B cell (primary cell): ENCODE measurements at regions of chr1 and their contacts with region 1.

Region 1: GRCh38 chr1:145891587-145892485 is 6.2 kb upstream of the ANKRD35 start:
- DNase-seq: peak; percentile 61
- ATAC-seq: peak; percentile 70
- H3K4me3 ChIP-seq: no peak overlapping the region
- H3K4me3 Mint-ChIP-seq: no peak overlapping the region
- H3K27ac ChIP-seq: no peak overlapping the region
- H3K27ac Mint-ChIP-seq: no peak overlapping the region
- H3K4me1 ChIP-seq: no peaks in the 10 kb centered on the region
- H3K4me1 Mint-ChIP-seq: peaks cover under 1% of the 10 kb centered on the region
- H3K27me3 ChIP-seq: no peaks in the 10 kb centered on the region
- H3K27me3 Mint-ChIP-seq: no peaks in the 10 kb centered on the region
- CTCF ChIP-seq: peak; percentile 72

Region 2: DNA sequence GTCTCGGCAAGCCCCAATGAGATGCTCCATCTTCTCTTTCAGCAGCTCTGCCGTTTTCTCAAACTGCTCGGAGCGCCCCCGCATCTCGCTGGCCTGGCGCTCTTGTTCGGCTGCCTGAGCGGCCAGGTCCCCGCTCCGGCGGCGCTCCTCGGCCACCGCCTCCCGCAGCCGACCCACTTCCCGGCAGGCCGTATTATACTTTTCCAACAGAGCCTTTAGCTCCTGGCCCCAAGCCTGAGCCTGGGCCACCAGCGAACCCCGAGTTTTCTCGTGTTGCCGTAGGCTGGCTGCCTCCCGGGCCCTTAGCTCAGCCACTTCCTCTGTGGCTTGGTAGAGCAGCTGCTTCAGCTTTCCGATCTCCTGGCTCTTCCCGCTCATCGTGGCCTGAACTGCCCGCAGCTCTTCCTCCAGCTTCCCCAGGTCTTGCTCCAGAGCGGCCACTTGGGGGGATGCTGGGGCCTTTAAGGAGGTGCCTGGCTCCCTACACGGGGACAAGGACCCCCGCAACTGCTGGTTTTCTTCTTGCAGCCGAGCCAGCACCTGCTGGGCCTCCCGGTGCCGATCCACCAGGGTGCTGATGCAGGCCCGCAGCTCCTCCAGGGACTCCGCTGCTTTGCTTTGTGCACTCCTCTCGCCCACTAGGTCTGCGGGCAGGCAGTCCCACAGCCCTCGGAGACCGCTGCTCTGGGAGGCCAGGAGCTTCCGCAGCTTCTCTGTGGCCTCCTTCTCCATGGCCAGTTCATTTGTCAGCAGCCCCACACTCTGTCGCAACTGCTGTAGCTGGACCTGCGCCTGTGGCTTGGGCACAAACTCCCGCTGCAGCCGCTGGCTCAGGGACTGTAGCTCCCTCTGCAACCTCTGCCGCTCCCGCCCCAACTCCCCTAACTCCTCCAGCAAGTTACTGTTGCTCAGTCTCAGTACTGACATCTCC is 19.6 kb before region 1 on chr1:
- CTCF ChIA-PET with region 1: interaction called, 12 read pairs
- POLR2A ChIA-PET with region 1: no interaction called
- intact Hi-C with region 1: no loop called
- DNase-seq: peak; percentile 67
- ATAC-seq: peak; percentile 60
- H3K4me3 ChIP-seq: peak overlapping the region in 4 of 5 experiments; percentile 22 to 70 (median 51)
- H3K4me3 Mint-ChIP-seq: peak overlapping the region; percentile 85
- H3K27ac ChIP-seq: peak overlapping the region in 1 of 2 donors; percentile 32
- H3K27ac Mint-ChIP-seq: peak overlapping the region; percentile 41
- H3K4me1 ChIP-seq: peaks cover 10 to 11% of the 10 kb centered on the region in 2 donors
- H3K4me1 Mint-ChIP-seq: peaks cover 13% of the 10 kb centered on the region
- H3K27me3 ChIP-seq: peaks cover 0 to 22% (median 0%) of the 10 kb centered on the region in 4 experiments
- H3K27me3 Mint-ChIP-seq: peaks cover 44% of the 10 kb centered on the region
- CTCF ChIP-seq: no peak

Region 3: GRCh38 chr1:145906954-145907753 is 15.3 kb after region 1 on chr1:
- CTCF ChIA-PET with region 1: interaction called, 28 read pairs
- POLR2A ChIA-PET with region 1: no interaction called
- intact Hi-C with region 1: no loop called
- DNase-seq: no peak
- ATAC-seq: no peak
- H3K4me3 ChIP-seq: no peak overlapping the region
- H3K4me3 Mint-ChIP-seq: no peak overlapping the region
- H3K27ac ChIP-seq: no peak overlapping the region
- H3K27ac Mint-ChIP-seq: no peak overlapping the region
- H3K4me1 ChIP-seq: peaks cover 0 to 2% of the 10 kb centered on the region in 2 donors
- H3K4me1 Mint-ChIP-seq: peaks cover 6% of the 10 kb centered on the region
- H3K27me3 ChIP-seq: no peaks in the 10 kb centered on the region
- H3K27me3 Mint-ChIP-seq: no peaks in the 10 kb centered on the region
- CTCF ChIP-seq: no peak

Region 4: GRCh38 chr1:146007506-146008133 is 115.8 kb after region 1 on chr1:
- CTCF ChIA-PET with region 1: interaction called, 41 read pairs
- POLR2A ChIA-PET with region 1: no interaction called
- intact Hi-C with region 1: no loop called
- DNase-seq: no peak
- ATAC-seq: no peak
- H3K4me3 ChIP-seq: no peak overlapping the region
- H3K4me3 Mint-ChIP-seq: no peak overlapping the region
- H3K27ac ChIP-seq: peak overlapping the region in 1 of 2 donors; percentile 83
- H3K27ac Mint-ChIP-seq: peak overlapping the region; percentile 95
- H3K4me1 ChIP-seq: peaks cover 13 to 24% of the 10 kb centered on the region in 2 donors
- H3K4me1 Mint-ChIP-seq: peaks cover 22% of the 10 kb centered on the region
- H3K27me3 ChIP-seq: no peaks in the 10 kb centered on the region
- H3K27me3 Mint-ChIP-seq: no peaks in the 10 kb centered on the region
- CTCF ChIP-seq: peak; percentile 18

Region 5: DNA sequence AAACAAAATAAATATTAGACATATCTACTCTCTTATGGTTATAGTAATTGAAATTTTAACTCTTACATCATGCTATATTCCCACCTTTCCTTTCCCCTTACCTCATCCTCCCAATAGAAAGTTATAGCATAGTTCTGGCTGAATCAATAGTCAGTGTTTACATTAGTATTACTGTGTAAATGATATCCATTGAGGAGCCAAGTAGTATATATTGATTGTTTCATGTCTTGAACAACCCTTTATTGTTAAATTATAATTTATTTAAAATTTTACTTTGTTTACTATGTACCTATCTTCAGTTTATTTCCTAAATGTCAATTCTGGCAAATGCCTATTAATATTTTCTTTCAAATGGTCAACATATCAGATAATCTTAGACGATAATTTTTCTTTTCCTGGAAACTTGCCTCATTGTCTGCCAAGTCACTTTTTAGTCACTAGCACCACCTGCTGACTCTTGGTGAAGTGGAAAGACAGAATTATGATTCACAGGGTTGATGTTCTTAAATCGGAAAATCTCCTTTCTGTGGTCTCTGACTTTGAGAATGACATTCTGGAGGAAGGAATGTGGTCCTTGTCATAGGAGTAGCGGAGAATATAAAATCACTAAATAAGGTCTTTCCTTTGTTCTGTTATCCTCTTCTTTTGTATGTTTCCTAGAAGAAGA is 121.0 kb after region 1 on chr1:
- CTCF ChIA-PET with region 1: interaction called, 41 read pairs
- POLR2A ChIA-PET with region 1: no interaction called
- intact Hi-C with region 1: loop called (anchors 1 kb)
- DNase-seq: peak; percentile 82
- ATAC-seq: peak; percentile 51
- H3K4me3 ChIP-seq: no peak overlapping the region
- H3K4me3 Mint-ChIP-seq: no peak overlapping the region
- H3K27ac ChIP-seq: no peak overlapping the region
- H3K27ac Mint-ChIP-seq: no peak overlapping the region
- H3K4me1 ChIP-seq: peaks cover 0 to under 1% of the 10 kb centered on the region in 2 donors
- H3K4me1 Mint-ChIP-seq: peaks cover 2% of the 10 kb centered on the region
- H3K27me3 ChIP-seq: peaks cover 0 to 4% (median 0%) of the 10 kb centered on the region in 4 experiments
- H3K27me3 Mint-ChIP-seq: peaks cover 14% of the 10 kb centered on the region
- CTCF ChIP-seq: peak; percentile 95

Region 6: GRCh38 chr1:146019231-146020057 is 127.6 kb after region 1 on chr1:
- CTCF ChIA-PET with region 1: interaction called, 41 read pairs
- POLR2A ChIA-PET with region 1: no interaction called
- intact Hi-C with region 1: no loop called
- DNase-seq: no peak
- ATAC-seq: no peak
- H3K4me3 ChIP-seq: peak overlapping the region in 2 of 5 experiments; percentile 15 to 22
- H3K4me3 Mint-ChIP-seq: peak overlapping the region; percentile 52
- H3K27ac ChIP-seq: no peak overlapping the region
- H3K27ac Mint-ChIP-seq: no peak overlapping the region
- H3K4me1 ChIP-seq: peaks cover 10 to 19% of the 10 kb centered on the region in 2 donors
- H3K4me1 Mint-ChIP-seq: peaks cover 10% of the 10 kb centered on the region
- H3K27me3 ChIP-seq: peaks cover 0 to 46% (median 32%) of the 10 kb centered on the region in 4 experiments
- H3K27me3 Mint-ChIP-seq: peaks cover 60% of the 10 kb centered on the region
- CTCF ChIP-seq: no peak